Left lung (tissue), 14 donors: ENCODE measurements at regions of chr6 and their contacts with region 1.

Region 1: GRCh38 chr6:166313255-166314070 is 5.3 kb upstream of the PRR18 start:
- DNase-seq: peak in 2 of 4 donors; percentile 19 to 84
- ATAC-seq: peak; percentile 95
- H3K4me3 ChIP-seq: no peak overlapping the region
- H3K27ac ChIP-seq: no peak overlapping the region
- H3K4me1 ChIP-seq: peaks cover under 1 to 3% of the 10 kb centered on the region in 2 donors
- H3K27me3 ChIP-seq: peaks cover 11 to 26% of the 10 kb centered on the region in 2 donors
- CTCF ChIP-seq: peak; percentile 45 to 75

Region 2: DNA sequence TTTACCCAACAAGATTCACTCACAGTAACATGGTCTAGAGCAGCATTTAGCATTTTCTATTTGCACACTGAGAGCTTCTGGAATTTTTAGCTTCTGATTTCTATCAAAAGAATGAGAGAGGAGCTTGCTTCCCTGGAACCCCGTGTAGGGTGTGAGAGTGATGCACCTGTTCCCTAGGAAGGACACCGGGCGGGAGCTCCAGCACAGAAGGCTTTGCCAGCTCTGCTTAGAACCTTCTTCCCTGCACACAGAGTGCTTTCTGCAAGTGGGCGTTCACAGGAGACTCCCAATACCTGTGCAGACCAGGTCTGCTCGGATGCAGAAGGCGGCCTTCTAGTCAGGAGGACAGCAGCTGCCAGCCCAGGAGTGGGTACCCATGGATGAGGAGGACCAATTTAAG is 363.1 kb before region 1 on chr6:
- intact Hi-C with region 1: no loop called
- DNase-seq: no peak
- ATAC-seq: no peak
- H3K4me3 ChIP-seq: no peak overlapping the region
- H3K27ac ChIP-seq: no peak overlapping the region
- H3K4me1 ChIP-seq: no peaks in the 10 kb centered on the region
- H3K27me3 ChIP-seq: peaks cover 0 to 5% of the 10 kb centered on the region in 2 donors
- CTCF ChIP-seq: no peak

Region 3: DNA sequence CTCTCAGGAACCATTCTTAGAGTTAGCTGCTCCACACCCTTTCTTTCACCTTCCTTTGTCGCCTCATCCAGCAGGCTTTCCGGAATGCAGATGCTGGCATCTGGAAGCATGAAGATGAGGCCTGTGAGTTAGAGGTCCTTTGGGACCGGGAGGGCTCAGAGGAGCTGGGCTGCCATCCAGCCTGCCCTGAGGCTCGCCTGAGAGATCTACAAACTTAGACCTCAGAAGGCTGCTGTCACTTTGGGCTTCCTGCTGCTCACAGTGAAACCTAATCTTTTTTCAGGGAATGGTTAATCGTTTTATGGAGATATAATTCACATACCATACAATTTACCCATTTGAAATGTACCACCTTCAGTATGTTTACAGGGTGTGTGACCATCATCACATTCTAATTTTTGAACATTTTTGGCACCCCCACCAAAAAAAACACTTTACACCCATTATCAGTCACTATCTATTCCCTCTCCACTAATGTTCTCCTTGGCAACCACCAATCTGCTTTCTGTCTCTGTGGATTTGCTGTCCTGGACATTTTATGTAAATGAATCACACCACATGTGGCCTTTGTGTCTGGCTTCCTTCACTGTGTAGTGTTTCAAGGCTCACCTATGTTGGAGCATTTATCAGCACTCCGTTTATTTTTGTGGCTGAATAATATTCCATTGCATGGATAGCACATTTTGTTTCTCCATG is 89.3 kb after region 1 on chr6:
- intact Hi-C with region 1: loop called in 1 of 2 experiments (anchors 10 kb)
- DNase-seq: no peak
- ATAC-seq: no peak
- H3K4me3 ChIP-seq: no peak overlapping the region
- H3K27ac ChIP-seq: no peak overlapping the region
- H3K4me1 ChIP-seq: no peaks in the 10 kb centered on the region
- H3K27me3 ChIP-seq: no peaks in the 10 kb centered on the region
- CTCF ChIP-seq: no peak

Region 4: DNA sequence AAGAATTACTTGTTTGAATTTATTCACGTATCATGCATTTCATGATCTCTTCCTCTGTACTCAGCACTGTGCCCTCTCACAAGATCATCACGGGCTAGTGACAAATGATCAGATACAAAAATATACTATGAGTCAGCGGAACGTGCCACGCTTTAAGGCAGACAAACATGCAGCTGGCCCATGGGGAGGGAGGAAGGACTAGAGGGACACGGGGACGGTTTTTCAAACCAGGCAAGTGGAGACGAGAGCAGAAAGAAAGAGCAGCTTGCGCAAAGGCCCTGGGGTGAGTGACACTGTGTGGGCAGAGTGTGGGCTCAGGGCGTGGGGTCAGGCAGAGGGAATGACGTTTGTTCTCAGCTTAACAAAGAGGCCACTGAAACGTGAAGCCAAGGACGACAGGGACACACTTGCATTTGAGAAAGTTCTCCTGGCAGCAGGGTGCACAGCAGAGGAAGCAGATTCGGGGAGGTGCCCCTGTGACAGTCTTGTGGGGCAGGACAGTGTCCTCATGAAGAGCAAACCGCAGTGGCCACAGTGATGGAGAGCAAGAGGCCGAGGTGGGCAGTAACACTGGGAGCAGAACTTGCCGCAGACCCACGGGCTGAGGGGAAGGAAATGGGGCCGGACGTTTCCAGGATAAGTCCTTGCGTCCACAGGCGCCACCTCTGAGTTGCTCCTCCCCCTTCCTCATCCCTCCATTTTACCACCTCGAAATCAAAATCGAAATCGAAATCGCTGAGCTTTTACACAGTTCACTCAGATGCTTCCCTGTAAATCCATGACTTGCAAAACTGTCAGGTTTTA is 320.5 kb after region 1 on chr6:
- intact Hi-C with region 1: no loop called
- DNase-seq: peak in 1 of 4 donors; percentile 61
- ATAC-seq: peak; percentile 22
- H3K4me3 ChIP-seq: no peak overlapping the region
- H3K27ac ChIP-seq: peak overlapping the region; percentile 24 to 43
- H3K4me1 ChIP-seq: peaks cover 0 to 34% of the 10 kb centered on the region in 2 donors
- H3K27me3 ChIP-seq: peaks cover 0 to 2% of the 10 kb centered on the region in 2 donors
- CTCF ChIP-seq: no peak